ENCODE measurements at regions of chr6 and their contacts with region 1.

Region 1: GRCh38 chr6:158554611-158555361 is 5.1 kb upstream of the TMEM181 start:
- DNase-seq: peak; percentile 96
- ATAC-seq: peak; percentile 84
- H3K4me3 ChIP-seq: peak overlapping the region in 2 of 3 experiments; percentile 13 to 33; a peak in 3 of 6 replicates
- H3K27ac ChIP-seq: peak overlapping the region; percentile 77
- H3K4me1 ChIP-seq: peaks cover 78% of the 10 kb centered on the region
- H3K27me3 ChIP-seq: no peaks in the 10 kb centered on the region
- CTCF ChIP-seq: 0 out of 2 replicates have a peak, but pooled peaks have one; percentile 14
- EP300 ChIP-seq: peak in 1 of 2 experiments; percentile 97; a peak in 2 of 4 replicates
- POLR2A ChIP-seq: no peak
- RAD21 ChIP-seq: no peak; the same call in 1 of the 2 replicates

Region 2: DNA sequence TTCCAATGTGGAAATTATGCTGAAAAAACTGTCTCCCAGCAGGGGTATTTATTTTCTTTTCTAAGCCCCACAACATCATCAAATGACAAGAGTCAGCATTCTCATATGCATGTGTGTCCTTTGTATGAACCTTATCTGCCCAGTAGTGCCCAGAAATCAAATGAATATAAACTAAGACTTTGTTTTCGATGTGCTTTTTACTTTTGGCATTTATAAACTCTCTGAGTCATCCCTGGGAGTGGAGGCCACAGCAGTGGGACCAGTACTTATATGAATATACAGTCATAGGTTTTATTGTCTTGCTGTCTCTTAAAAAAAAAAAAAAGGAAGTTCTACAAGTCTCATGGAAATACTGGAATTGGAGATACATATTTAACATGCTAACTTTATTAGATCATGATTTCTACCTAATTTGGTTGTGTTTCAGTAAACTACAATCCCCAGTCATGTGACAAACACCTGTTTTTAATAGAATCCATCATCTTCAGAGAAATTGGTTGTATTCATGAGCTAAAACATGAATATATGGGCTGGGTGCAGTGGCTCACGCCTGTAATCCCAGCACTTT is 94.1 kb before region 1 on chr6:
- CTCF ChIA-PET with region 1: no interaction called
- POLR2A ChIA-PET with region 1: no interaction called
- in situ Hi-C with region 1: no loop called
- intact Hi-C with region 1: no loop called
- DNase-seq: no peak
- ATAC-seq: no peak
- H3K4me3 ChIP-seq: no peak overlapping the region
- H3K27ac ChIP-seq: no peak overlapping the region
- H3K4me1 ChIP-seq: no peaks in the 10 kb centered on the region
- H3K27me3 ChIP-seq: no peaks in the 10 kb centered on the region
- CTCF ChIP-seq: no peak
- EP300 ChIP-seq: no peak
- POLR2A ChIP-seq: no peak
- RAD21 ChIP-seq: no peak

Region 3: GRCh38 chr6:158571826-158572652 is 17.3 kb after region 1 on chr6:
- CTCF ChIA-PET with region 1: no interaction called
- POLR2A ChIA-PET with region 1: interaction called, 14 read pairs
- in situ Hi-C with region 1: no loop called
- intact Hi-C with region 1: no loop called
- DNase-seq: peak; percentile 94
- ATAC-seq: peak; percentile 95
- H3K4me3 ChIP-seq: peak overlapping the region in 2 of 3 experiments; percentile 33 to 60; a peak in 4 of 6 replicates
- H3K27ac ChIP-seq: peak overlapping the region; percentile 70
- H3K4me1 ChIP-seq: peaks cover 93% of the 10 kb centered on the region
- H3K27me3 ChIP-seq: no peaks in the 10 kb centered on the region
- CTCF ChIP-seq: peak; percentile 45
- EP300 ChIP-seq: peak in 1 of 2 experiments; percentile 61; a peak in 2 of 4 replicates
- POLR2A ChIP-seq: no peak
- RAD21 ChIP-seq: peak; percentile 77

Region 4: DNA sequence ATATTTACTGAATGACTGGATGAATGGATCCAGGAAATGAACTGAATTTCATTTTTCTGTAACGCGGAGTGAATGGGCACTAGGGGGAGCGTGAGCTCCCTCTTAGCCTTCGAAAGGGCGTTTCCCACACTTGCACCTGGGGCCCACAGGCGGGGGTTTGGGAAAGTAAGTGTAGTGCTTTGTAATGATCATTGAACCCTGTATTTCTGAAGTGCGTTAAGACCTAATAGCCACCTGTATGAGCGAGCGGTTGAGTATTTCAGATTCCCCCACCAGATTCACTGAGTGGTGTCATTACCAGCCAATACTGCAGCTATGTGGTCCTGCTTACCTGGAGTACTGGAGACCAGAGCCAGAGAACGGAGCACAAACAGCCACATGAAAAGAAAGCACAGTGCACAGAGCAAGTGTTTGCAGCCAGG is 105.6 kb after region 1 on chr6:
- CTCF ChIA-PET with region 1: no interaction called
- POLR2A ChIA-PET with region 1: no interaction called
- in situ Hi-C with region 1: no loop called
- intact Hi-C with region 1: no loop called
- DNase-seq: no peak
- ATAC-seq: peak; percentile 79
- H3K4me3 ChIP-seq: no peak overlapping the region
- H3K27ac ChIP-seq: no peak overlapping the region
- H3K4me1 ChIP-seq: peaks cover 17% of the 10 kb centered on the region
- H3K27me3 ChIP-seq: peaks cover 9 to 47% of the 10 kb centered on the region in 2 experiments; a peak in 4 of 5 replicates
- CTCF ChIP-seq: peak; percentile 72
- EP300 ChIP-seq: no peak
- POLR2A ChIP-seq: no peak
- RAD21 ChIP-seq: peak; percentile 52; the same call in 1 of the 2 replicates